ENCODE measurements at regions of chr7 and their contacts with region 1.

Region 1: GRCh38 chr7:140062528-140063299 is at the start of gene PARP12:
- DNase-seq: peak; percentile 77 to 86 (median 83)
- ATAC-seq: peak; percentile 91
- H3K4me3 ChIP-seq: peak within 1 kb of the TSS; percentile 79
- H3K4me3 Mint-ChIP-seq: peak within 1 kb of the TSS; percentile 79 to 94 (median 90)
- H3K27ac ChIP-seq: peak within 1 kb of the TSS; percentile 81
- H3K27ac Mint-ChIP-seq: peak within 1 kb of the TSS; percentile 83 to 95 (median 92)
- H3K4me1 ChIP-seq: peaks cover 32 to 38% of the 10 kb centered on the region in 2 donors
- H3K4me1 Mint-ChIP-seq: peaks cover 34 to 55% (median 48%) of the 10 kb centered on the region in 7 donors
- H3K27me3 ChIP-seq: no peaks in the 10 kb centered on the region
- H3K27me3 Mint-ChIP-seq: peaks cover 0 to 7% (median 0%) of the 10 kb centered on the region in 5 donors
- total RNA-seq, gene PARP12: 66.2 to 145 (median 94.5) TPM

Region 2: DNA sequence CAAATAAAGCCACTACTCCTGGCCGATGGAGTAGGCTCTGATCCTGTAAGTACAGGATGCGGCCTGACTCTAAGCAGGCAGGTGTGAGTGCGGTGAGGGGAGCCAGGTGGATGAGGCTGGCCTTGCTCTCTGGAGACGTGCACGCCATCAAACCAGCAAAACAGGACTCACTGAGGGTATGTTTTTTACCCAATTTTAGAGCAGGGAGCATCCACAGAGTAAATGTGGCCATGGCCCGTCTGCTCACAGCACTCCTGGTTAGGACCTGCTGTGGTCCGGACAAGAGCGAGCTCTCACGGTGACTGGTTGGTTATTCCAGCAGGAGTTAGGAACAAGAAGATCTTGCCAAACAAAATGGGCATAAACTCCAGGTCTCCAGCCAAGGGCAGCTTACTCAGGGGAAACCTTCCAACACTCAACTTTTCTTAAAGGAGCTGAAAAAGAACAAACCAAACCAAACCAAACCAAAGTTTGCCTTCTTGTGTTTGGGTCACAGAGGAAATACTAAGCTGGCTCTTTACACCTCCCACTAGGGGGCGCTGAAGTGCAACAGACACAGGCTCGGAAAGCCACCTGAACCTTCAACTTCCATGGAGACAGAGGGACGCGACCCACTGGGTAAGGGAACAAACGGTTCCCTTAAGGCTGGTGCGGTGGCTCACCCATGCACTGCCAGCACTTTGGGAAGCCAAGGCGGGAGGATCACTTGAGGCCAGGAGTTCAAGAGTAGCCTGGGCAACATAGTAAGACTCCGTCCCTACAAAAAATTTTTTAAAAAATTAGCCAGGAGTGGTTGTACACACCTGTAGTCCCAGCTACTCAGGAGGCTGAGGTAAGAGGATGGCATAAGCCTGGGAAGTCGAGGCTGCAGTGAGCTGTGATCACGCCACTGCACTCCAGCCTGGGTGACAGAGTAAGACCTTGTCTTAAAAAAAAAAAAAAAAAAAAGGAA is 416.9 kb before region 1 on chr7:
- CTCF ChIA-PET with region 1: no interaction called
- POLR2A ChIA-PET with region 1: no interaction called
- intact Hi-C with region 1: loop called in 1 of 2 experiments (anchors 5 kb)
- DNase-seq: peak; percentile 72 to 93 (median 80)
- ATAC-seq: peak; percentile 73
- H3K4me3 ChIP-seq: no peak overlapping the region
- H3K4me3 Mint-ChIP-seq: peak overlapping the region in 8 of 10 donors; percentile 44 to 77 (median 61)
- H3K27ac ChIP-seq: no peak overlapping the region
- H3K27ac Mint-ChIP-seq: peak overlapping the region in 7 of 9 donors; percentile 46 to 92 (median 64)
- H3K4me1 ChIP-seq: peaks cover 0 to 78% of the 10 kb centered on the region in 2 donors
- H3K4me1 Mint-ChIP-seq: peaks cover 61 to 96% (median 87%) of the 10 kb centered on the region in 7 donors
- H3K27me3 ChIP-seq: no peaks in the 10 kb centered on the region
- H3K27me3 Mint-ChIP-seq: no peaks in the 10 kb centered on the region

Region 3: GRCh38 chr7:140084972-140085371 is 22.3 kb after region 1 on chr7:
- CTCF ChIA-PET with region 1: no interaction called
- POLR2A ChIA-PET with region 1: interaction called, 6 read pairs
- intact Hi-C with region 1: loop called (anchors 2 kb)
- DNase-seq: peak in 1 of 9 donors; percentile 19
- ATAC-seq: peak; percentile 60
- H3K4me3 ChIP-seq: no peak overlapping the region
- H3K4me3 Mint-ChIP-seq: peak overlapping the region in 9 of 10 donors; percentile 0 to 60 (median 44)
- H3K27ac ChIP-seq: peak overlapping the region; percentile 11
- H3K27ac Mint-ChIP-seq: peak overlapping the region; percentile 36 to 90 (median 78)
- H3K4me1 ChIP-seq: peaks cover 0 to 16% of the 10 kb centered on the region in 2 donors
- H3K4me1 Mint-ChIP-seq: peaks cover 23 to 54% (median 31%) of the 10 kb centered on the region in 7 donors
- H3K27me3 ChIP-seq: no peaks in the 10 kb centered on the region
- H3K27me3 Mint-ChIP-seq: no peaks in the 10 kb centered on the region

Region 4: DNA sequence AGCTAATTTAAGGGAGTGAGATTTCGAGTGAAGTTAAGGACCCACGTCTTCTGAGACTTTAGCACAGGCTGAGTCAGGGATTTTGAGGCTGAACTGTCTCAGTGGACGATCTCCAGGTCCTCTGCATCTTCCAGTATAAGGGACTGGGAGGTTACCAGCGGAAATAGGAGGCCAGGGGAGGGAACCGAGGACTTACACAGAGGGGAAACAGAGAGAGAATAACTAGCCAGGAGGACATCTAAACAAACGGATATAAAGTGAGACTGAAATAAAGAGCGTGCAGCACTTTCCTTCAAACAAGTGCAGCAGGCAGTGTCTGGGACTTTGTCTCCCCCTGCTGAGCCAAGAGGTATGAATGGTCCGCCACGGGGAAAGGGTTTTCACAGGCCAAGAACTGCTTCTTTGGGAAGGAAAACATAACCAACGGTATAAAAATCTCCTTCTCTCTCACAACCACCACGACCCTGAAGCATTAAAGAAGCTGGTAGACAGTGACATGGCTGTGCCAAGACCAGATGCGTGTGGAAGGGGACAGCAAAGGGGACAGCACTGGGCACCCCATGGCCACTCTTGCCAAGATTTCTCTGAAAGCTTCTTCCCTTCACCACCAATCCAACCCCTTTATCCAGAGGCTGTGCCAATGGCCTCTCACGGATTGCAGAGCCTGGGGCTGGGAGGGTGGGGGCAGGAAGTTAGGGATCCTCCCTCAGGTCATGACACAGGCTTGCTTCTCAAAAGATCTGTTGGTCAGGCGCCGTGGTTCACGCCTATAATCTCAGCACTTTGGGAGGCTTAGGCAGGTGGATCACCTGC is 263.6 kb after region 1 on chr7:
- CTCF ChIA-PET with region 1: no interaction called
- POLR2A ChIA-PET with region 1: no interaction called
- intact Hi-C with region 1: loop called in 1 of 2 experiments (anchors 5 kb)
- DNase-seq: peak; percentile 16 to 61 (median 54)
- ATAC-seq: peak; percentile 88
- H3K4me3 ChIP-seq: no peak overlapping the region
- H3K4me3 Mint-ChIP-seq: no peak overlapping the region
- H3K27ac ChIP-seq: no peak overlapping the region
- H3K27ac Mint-ChIP-seq: peak overlapping the region in 1 of 9 donors; percentile 76
- H3K4me1 ChIP-seq: peaks cover 4 to 5% of the 10 kb centered on the region in 2 donors
- H3K4me1 Mint-ChIP-seq: peaks cover 0 to 3% (median 0%) of the 10 kb centered on the region in 7 donors
- H3K27me3 ChIP-seq: no peaks in the 10 kb centered on the region
- H3K27me3 Mint-ChIP-seq: no peaks in the 10 kb centered on the region

Region 5: GRCh38 chr7:140673063-140673773 is 610.5 kb after region 1 on chr7:
- CTCF ChIA-PET with region 1: no interaction called
- POLR2A ChIA-PET with region 1: no interaction called
- intact Hi-C with region 1: loop called in 1 of 2 experiments (anchors 10 kb)
- DNase-seq: peak; percentile 56 to 78 (median 75)
- ATAC-seq: peak; percentile 82
- H3K4me3 ChIP-seq: peak overlapping the region; percentile 82
- H3K4me3 Mint-ChIP-seq: peak overlapping the region; percentile 81 to 94 (median 89)
- H3K27ac ChIP-seq: peak overlapping the region; percentile 91
- H3K27ac Mint-ChIP-seq: peak overlapping the region; percentile 68 to 97 (median 88)
- H3K4me1 ChIP-seq: peaks cover 11 to 14% of the 10 kb centered on the region in 2 donors
- H3K4me1 Mint-ChIP-seq: peaks cover 16 to 42% (median 37%) of the 10 kb centered on the region in 7 donors
- H3K27me3 ChIP-seq: no peaks in the 10 kb centered on the region
- H3K27me3 Mint-ChIP-seq: peaks cover 0 to 7% (median 0%) of the 10 kb centered on the region in 5 donors

Measured in naive thymus-derived CD4-positive, alpha-beta T cell (primary cell).